WTC11 (cell line): ENCODE measurements at regions of chr1 and their contacts with region 1.

Region 1: DNA sequence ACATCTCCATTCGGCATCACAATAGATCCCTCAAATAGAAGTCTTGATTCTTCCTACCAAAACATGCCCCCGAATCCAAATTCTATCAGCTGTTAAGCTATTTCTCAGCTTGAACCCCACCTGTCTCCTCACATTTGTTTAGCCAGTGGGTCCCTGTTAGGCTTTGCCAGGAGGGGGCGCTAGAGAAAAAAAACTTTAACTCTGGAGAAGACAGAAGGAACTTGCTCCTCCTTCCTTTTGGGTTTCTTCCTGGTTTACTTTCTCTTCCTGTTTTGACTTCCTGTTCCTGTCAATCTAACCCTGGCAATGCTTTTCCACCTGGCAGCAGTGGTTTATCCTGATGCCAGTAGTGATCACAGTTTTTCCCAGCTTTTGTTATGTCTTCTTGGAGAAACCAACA is 95.6 kb upstream of the KCNK1 start:
- DNase-seq: peak; percentile 71
- ATAC-seq: peak; percentile 81
- H3K4me3 Mint-ChIP-seq: no peak overlapping the region
- H3K27ac Mint-ChIP-seq: no peak overlapping the region
- H3K4me1 Mint-ChIP-seq: peaks cover 6% of the 10 kb centered on the region
- H3K27me3 Mint-ChIP-seq: no peaks in the 10 kb centered on the region
- CTCF ChIP-seq: peak; percentile 71

Region 2: GRCh38 chr1:233448109-233448689 is 70.2 kb before region 1 on chr1:
- CTCF ChIA-PET with region 1: no interaction called
- POLR2A ChIA-PET with region 1: no interaction called
- DNase-seq: no peak
- ATAC-seq: no peak
- H3K4me3 Mint-ChIP-seq: no peak overlapping the region
- H3K27ac Mint-ChIP-seq: no peak overlapping the region
- H3K4me1 Mint-ChIP-seq: peaks cover 6% of the 10 kb centered on the region
- H3K27me3 Mint-ChIP-seq: peaks cover 4% of the 10 kb centered on the region; the same call in 1 of the 2 replicates
- CTCF ChIP-seq: no peak

Region 3: GRCh38 chr1:233790662-233791375 is 272.5 kb after region 1 on chr1:
- CTCF ChIA-PET with region 1: interaction called, 14 read pairs
- POLR2A ChIA-PET with region 1: no interaction called
- DNase-seq: peak; percentile 16
- ATAC-seq: peak; percentile 95
- H3K4me3 Mint-ChIP-seq: no peak overlapping the region
- H3K27ac Mint-ChIP-seq: no peak overlapping the region
- H3K4me1 Mint-ChIP-seq: 0 out of 2 replicates have a peak, but pooled peaks cover 2% of the 10 kb centered on the region
- H3K27me3 Mint-ChIP-seq: no peaks in the 10 kb centered on the region
- CTCF ChIP-seq: peak; percentile 81